Activated CD4-positive, alpha-beta T cell treated with anti-CD3 and anti-CD28 coated beads for 36 hours (primary cell): ENCODE measurements at regions of chr17 and their contacts with region 1.

Region 1: DNA sequence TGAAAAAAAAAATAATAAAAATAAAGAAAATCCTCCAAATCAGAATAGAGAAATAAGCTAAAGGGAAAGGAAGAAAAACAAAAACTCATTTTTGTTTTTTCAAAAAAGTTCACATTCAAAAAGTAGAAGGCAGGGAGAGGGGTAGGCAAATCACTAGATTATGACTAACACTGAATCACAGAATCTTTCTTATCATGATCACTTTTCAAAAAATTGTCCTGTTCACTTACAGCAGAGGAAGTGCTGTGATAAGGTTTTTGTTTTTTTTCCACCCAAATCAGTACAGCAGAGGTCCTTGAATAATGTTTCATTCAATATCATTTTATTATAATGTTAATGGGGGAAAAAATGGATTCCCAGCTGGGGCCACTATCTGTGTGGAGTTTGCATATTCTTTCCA is 106.4 kb downstream of the CA4 start:
- DNase-seq: no peak
- ATAC-seq: no peak
- H3K4me3 Mint-ChIP-seq: no peak overlapping the region
- H3K27ac Mint-ChIP-seq: no peak overlapping the region
- H3K4me1 Mint-ChIP-seq: peaks cover 7% of the 10 kb centered on the region
- H3K27me3 Mint-ChIP-seq: no peaks in the 10 kb centered on the region

Region 2: DNA sequence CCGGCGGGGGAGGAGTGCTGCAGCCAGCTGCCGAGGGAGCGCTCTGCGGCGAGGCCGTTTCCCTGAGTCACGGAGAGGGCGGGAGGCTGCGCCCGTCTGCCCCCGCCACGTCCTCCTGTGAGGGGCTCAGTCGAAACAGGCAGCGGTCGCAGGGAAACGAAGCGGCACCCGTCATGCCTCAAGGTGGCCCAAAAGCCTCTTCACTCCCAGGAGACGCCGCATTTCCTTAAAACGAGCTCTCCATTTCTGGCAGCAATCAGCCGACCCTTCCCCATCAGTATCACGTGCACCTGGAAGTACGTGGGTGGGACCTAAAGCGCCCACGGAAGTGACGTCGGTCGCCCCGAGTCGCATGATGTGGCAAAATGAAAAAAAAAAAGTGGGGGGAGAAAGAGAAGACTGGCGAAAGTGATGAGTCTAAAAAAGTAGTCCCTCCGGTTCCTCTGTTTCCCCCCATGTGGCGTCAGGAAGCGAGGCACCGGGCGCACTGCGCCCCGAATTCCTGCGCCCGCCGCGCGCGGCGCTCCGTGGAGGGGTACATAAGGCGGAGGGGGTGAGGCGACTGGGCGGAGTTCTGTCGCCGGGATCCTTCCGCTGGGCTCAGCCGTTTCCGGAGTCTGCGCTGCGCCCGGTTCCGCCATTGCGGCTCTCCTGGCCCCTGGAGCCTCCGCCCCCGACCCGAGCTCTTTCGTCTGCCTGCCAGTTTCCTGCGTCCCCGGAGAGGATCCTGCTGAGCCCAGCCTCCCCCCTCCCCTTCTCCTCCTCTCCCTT is 636.7 kb before region 1 on chr17 and contains the start of gene CLTC:
- CTCF ChIA-PET with region 1: no interaction called
- POLR2A ChIA-PET with region 1: no interaction called
- intact Hi-C with region 1: no loop called
- DNase-seq: peak; percentile 97
- ATAC-seq: peak; percentile 85
- H3K4me3 Mint-ChIP-seq: peak within 1 kb of the TSS; percentile 89
- H3K27ac Mint-ChIP-seq: peak within 1 kb of the TSS; percentile 98
- H3K4me1 Mint-ChIP-seq: peaks cover 49% of the 10 kb centered on the region
- H3K27me3 Mint-ChIP-seq: no peaks in the 10 kb centered on the region
- total RNA-seq, gene CLTC: 180 to 186 TPM

Region 3: DNA sequence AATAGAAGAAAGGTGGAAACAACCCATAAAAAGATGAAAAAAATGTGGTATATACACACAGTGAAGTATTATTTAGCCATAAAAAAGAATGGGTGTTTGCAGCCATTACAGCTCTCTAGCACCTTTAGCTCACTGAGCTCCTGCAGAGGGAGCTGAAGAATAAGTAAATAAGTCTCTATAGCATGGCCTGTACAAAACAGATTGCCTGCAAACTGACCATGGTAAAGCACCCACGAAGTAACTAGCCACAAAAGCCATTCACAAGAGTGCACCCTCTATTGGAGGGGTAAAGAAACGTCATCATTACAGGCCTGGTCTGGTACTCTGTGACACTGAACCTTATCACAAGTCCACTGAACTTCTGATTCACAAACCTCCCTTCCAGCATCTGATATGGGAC is 59.5 kb after region 1 on chr17:
- CTCF ChIA-PET with region 1: no interaction called
- POLR2A ChIA-PET with region 1: no interaction called
- intact Hi-C with region 1: loop called in 1 of 2 experiments (anchors 10 kb)
- DNase-seq: no peak
- ATAC-seq: no peak
- H3K4me3 Mint-ChIP-seq: no peak overlapping the region
- H3K27ac Mint-ChIP-seq: no peak overlapping the region
- H3K4me1 Mint-ChIP-seq: peaks cover 12% of the 10 kb centered on the region
- H3K27me3 Mint-ChIP-seq: no peaks in the 10 kb centered on the region

Region 4: GRCh38 chr17:60354223-60354622 is 98.0 kb after region 1 on chr17:
- CTCF ChIA-PET with region 1: no interaction called
- POLR2A ChIA-PET with region 1: no interaction called
- intact Hi-C with region 1: no loop called
- DNase-seq: no peak
- ATAC-seq: no peak
- H3K4me3 Mint-ChIP-seq: no peak overlapping the region
- H3K27ac Mint-ChIP-seq: peak overlapping the region; percentile 70
- H3K4me1 Mint-ChIP-seq: peaks cover 43% of the 10 kb centered on the region
- H3K27me3 Mint-ChIP-seq: no peaks in the 10 kb centered on the region

Region 5: DNA sequence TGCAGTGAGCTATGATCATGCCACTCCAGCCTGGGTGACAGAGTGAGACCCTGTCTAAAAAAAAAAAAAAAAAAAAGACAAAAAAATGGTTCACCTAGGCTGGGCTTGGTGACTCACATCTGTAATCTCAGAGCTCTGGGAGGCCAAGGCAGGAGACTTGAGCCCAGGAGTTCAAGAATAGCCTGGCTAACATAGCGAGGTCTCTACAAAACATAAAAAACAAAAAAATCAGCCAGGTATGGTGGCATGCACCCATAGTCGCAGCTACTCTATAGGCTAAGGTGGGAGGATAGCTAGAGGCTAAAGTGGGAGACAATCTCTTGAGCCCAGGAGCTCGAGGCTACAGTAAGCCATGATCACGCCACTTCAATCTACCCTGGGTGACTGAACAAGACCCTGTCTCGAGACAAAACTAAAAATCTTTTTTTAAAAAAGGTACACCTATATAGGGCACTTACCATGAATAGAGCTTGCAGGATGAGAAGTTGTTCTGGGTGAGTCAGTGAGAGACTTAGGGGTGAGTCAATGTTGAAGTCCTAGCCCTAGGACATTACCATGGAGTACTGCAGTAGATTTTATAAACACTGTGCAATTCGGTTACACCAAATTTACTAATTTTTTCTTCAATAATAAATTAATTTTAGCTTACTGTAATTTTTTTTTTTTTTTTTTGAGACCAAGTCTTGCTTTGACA is 116.8 kb after region 1 on chr17:
- CTCF ChIA-PET with region 1: no interaction called
- POLR2A ChIA-PET with region 1: no interaction called
- intact Hi-C with region 1: no loop called
- DNase-seq: peak; percentile 14
- ATAC-seq: peak; percentile 98
- H3K4me3 Mint-ChIP-seq: no peak overlapping the region
- H3K27ac Mint-ChIP-seq: no peak overlapping the region
- H3K4me1 Mint-ChIP-seq: peaks cover 16% of the 10 kb centered on the region
- H3K27me3 Mint-ChIP-seq: no peaks in the 10 kb centered on the region